Lower leg skin (tissue), 4 donors: ENCODE measurements at regions of chr2 and their contacts with region 1.

Region 1: DNA sequence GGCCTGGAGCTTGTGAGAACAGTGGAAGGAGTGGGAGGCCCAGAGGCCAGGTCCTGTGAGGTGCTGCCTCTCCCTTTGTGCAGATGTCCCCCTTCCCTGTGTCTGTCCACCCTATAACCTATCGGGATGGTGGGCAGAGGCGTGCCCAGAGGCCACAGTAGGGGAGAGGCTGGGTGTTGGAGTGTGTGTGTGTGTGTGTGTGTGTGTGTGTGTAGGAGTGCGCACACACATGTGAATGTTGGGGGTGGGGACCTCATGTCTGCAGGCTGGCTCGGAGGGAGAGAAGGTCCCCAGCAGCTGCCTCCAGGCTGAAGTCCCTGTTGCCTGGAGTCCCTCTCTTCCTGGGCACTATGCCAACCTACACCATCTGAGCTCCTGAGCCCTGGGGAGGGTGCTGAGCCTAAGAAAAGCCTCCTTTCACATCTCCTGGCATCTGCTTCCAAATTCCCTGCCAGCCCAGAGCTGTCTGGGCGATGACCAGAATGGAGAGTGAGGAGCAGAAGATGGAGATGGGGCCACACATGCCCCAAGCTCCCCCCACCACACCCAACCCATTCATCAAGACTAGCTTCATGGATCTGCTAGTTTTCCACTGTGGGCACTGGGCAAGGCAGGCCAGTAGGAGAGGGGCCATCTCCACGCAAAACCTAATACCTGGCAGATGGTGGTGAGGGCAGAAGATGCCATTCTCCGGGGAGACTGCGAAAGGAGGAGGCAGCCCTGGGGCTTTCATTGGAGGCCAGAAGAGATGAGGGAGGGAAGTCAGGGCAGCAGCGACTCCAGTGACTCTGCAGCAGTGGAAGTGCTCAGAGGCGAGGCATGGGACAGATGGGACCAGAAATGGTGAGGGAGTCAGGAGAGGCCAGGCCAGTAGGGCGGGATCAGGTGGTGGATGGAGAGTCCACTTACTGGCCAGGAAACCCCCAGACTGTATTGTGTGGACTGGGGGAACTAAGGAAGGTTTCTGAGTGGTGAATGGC is 20.3 kb downstream of the KCNK3 start:
- DNase-seq: no peak
- H3K4me3 ChIP-seq: no peak overlapping the region
- CTCF ChIP-seq: no peak
- POLR2A ChIP-seq: no peak

Region 2: DNA sequence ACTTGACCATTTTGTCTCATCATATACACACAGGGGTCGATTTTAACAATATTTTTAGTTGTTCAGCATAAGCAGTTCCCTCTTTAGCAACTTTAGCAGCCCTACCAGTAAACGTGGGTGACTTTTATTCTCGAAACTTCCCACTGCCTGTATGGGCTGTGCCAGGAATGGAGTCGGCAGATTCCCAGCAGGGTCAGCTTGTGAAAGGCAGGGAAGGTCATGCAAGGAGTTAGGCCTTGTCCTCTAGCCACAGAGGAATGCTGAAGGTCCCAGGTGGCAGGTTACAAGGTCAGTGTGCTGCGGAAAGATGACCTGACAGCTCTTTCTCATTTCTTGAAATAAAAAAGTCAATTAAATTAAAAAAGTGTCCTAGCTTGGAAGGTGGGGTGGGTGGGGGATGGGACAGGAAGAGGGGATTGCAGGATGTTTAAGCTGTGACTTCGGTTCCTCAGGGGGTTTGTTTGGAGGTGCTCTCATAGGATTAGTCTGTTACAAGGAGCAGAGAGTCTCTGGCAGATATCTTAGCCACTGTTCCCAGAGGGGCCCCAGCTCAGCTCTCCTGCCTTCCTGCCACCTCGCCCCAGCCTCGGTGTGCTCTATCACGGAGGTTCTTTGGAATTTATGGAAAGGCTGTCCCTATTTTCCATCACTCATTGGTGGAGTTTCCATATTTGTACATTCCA is 289.7 kb before region 1 on chr2:
- intact Hi-C with region 1: no loop called
- DNase-seq: no peak
- H3K4me3 ChIP-seq: no peak overlapping the region
- CTCF ChIP-seq: no peak
- POLR2A ChIP-seq: no peak

Region 3: GRCh38 chr2:27903649-27904404 is 1191.1 kb after region 1 on chr2:
- intact Hi-C with region 1: loop called (anchors 10 kb)
- DNase-seq: no peak
- H3K4me3 ChIP-seq: no peak overlapping the region
- CTCF ChIP-seq: no peak
- POLR2A ChIP-seq: no peak